ENCODE measurements at regions of chr18 and their contacts with region 1.

Region 1: GRCh38 chr18:62131301-62131909 is 55.5 kb downstream of the PIGN start:
- DNase-seq: peak; percentile 10
- ATAC-seq: peak; percentile 65; the same call in 1 of the 2 replicates
- H3K4me3 ChIP-seq: no peak overlapping the region
- H3K27ac ChIP-seq: no peak overlapping the region
- H3K4me1 ChIP-seq: no peaks in the 10 kb centered on the region
- H3K27me3 ChIP-seq: no peaks in the 10 kb centered on the region
- CTCF ChIP-seq: peak; percentile 74; the same call in 1 of the 2 replicates

Region 2: GRCh38 chr18:61581578-61582201 is 549.7 kb before region 1 on chr18:
- CTCF ChIA-PET with region 1: interaction called, 3 read pairs
- POLR2A ChIA-PET with region 1: no interaction called
- in situ Hi-C with region 1: no loop called
- intact Hi-C with region 1: loop called (anchors 2 kb)
- DNase-seq: peak; percentile 35
- ATAC-seq: peak; percentile 91
- H3K4me3 ChIP-seq: peak overlapping the region; percentile 17 to 37; a peak in 3 of 4 replicates
- H3K27ac ChIP-seq: no peak overlapping the region
- H3K4me1 ChIP-seq: no peaks in the 10 kb centered on the region; the same call in 1 of the 2 replicates
- H3K27me3 ChIP-seq: no peaks in the 10 kb centered on the region
- CTCF ChIP-seq: peak; percentile 84

Region 3: GRCh38 chr18:63131106-63131958 is 999.9 kb after region 1 on chr18:
- CTCF ChIA-PET with region 1: no interaction called
- POLR2A ChIA-PET with region 1: no interaction called
- in situ Hi-C with region 1: no loop called
- intact Hi-C with region 1: no loop called
- DNase-seq: no peak
- ATAC-seq: no peak
- H3K4me3 ChIP-seq: no peak overlapping the region
- H3K27ac ChIP-seq: no peak overlapping the region
- H3K4me1 ChIP-seq: no peaks in the 10 kb centered on the region
- H3K27me3 ChIP-seq: no peaks in the 10 kb centered on the region
- CTCF ChIP-seq: peak; percentile 57